T-cell (primary cell): ENCODE measurements at regions of chr15 and their contacts with region 1.

Region 1: DNA sequence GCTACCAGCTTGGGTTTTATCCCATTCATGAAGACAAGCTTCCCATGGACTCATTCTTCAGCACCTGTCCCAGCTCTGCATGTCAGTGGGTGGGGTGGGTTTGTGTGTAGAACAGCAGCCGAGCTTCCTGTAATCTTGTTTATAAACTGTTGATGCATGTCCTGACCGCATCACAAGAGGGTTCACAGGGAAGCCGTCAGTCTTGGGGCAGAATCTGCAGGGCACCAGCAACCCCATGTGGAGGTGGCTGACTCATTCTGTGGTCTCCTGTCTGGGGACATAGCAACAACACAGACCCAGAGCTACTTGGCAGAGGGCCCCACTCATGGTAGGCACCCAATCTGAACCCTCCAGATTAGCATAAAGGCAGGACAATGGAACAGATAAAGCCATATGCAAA is 35.6 kb downstream of the DAPK2 start:
- DNase-seq: peak; percentile 64 to 96 (median 87)
- ATAC-seq: peak; percentile 97 to 99 (median 98)
- H3K4me3 ChIP-seq: no peak overlapping the region
- H3K4me3 Mint-ChIP-seq: peak overlapping the region; percentile 62 to 73 (median 64)
- H3K27ac ChIP-seq: peak overlapping the region; percentile 87
- H3K27ac Mint-ChIP-seq: peak overlapping the region; percentile 97 to 98
- H3K4me1 ChIP-seq: peaks cover 10 to 34% of the 10 kb centered on the region in 2 experiments
- H3K4me1 Mint-ChIP-seq: peaks cover 31 to 81% (median 48%) of the 10 kb centered on the region in 3 donors
- H3K27me3 ChIP-seq: no peaks in the 10 kb centered on the region
- H3K27me3 Mint-ChIP-seq: no peaks in the 10 kb centered on the region

Region 2: DNA sequence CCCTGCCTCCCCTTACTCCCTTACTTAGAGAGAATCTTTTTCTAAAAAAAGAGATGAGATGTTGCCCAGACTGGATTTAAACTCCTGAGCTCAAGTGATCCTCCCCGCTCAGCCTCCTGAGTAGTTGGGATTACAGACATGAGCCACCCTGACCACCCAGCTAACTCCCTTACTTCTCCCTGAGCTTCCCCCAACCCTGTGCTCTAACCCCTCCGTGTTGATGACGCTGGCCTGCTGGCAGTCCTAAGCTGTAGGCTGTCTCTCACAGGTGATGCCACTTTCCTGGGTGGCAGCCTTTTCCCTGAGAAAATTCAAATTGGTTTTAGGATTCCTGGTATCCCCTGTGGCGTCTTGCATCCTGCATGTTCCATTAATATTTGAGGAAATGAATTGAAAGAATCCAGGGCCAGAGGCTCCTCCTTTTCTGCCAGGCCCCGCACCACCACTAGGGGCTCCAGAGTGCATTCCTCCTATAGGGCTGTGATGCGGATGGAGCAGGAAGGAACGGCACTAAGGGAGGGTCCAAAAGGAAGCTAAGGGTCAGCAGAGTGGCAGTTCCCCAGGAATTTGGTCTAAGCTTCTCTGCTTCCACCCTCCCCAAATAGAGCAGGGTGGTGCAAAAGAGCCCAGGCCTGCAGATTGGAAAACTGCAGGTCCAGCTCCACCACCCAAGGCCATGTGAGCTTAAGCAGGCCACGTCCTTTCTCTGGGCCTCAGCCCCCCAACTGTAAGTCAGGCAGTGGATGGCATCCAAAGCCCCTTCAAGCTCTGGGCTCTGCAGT is 65.5 kb before region 1 on chr15:
- CTCF ChIA-PET with region 1: interaction called, 5 to 19 read pairs
- POLR2A ChIA-PET with region 1: no interaction called
- DNase-seq: peak; percentile 11 to 73 (median 58)
- ATAC-seq: peak; percentile 81 to 91 (median 89)
- H3K4me3 ChIP-seq: no peak overlapping the region
- H3K4me3 Mint-ChIP-seq: peak overlapping the region in 1 of 3 donors; percentile 13
- H3K27ac ChIP-seq: no peak overlapping the region
- H3K27ac Mint-ChIP-seq: peak overlapping the region; percentile 8 to 74
- H3K4me1 ChIP-seq: peaks cover 0 to 14% of the 10 kb centered on the region in 2 experiments
- H3K4me1 Mint-ChIP-seq: peaks cover 13 to 28% (median 20%) of the 10 kb centered on the region in 3 donors
- H3K27me3 ChIP-seq: no peaks in the 10 kb centered on the region
- H3K27me3 Mint-ChIP-seq: no peaks in the 10 kb centered on the region

Region 3: DNA sequence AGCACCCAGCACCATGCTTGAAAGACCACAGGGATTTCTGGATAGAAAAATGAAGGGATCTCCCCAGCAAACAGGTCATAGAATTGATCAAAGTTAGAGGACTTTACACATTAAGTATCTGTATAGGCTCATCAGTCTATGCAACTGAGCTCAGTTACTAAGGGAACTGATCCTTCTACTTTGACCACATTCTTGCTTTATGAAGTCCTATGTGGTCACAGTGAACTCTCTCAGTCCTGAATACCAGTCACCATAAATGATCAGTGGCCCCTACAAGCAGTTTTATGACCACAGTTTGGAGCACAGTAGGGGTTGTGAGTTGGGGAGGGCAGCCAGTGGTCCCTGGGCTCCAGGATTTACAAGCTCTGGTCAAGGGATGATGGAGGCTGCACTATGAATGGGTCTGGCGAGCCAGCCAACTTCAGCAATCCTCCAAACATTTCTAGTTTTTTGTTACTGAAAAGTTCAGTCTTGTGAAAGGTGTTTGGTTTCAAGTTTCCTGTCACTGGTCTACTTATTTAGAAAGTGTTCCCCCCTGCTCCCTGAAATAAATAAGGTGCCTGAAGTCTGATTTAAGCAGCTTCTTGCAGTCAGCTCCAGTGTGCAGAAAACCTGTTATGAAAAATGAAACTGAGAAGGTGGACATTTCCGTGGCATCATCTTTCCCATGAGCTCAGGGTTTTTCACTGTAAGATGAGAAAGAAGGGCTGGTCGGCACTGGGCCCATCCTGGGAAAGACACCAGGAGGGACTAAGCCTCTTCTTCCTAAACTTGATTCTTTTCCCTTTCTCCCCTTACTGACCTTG is 39.9 kb before region 1 on chr15:
- CTCF ChIA-PET with region 1: interaction called in 1 of 2 experiments, 16 read pairs
- POLR2A ChIA-PET with region 1: interaction called in 1 of 2 experiments, 3 read pairs
- DNase-seq: peak in 1 of 35 experiments; percentile 34
- ATAC-seq: peak; percentile 39 to 58 (median 48)
- H3K4me3 ChIP-seq: peak overlapping the region in 1 of 2 donors; percentile 19
- H3K4me3 Mint-ChIP-seq: peak overlapping the region; percentile 48 to 54 (median 53)
- H3K27ac ChIP-seq: peak overlapping the region; percentile 90
- H3K27ac Mint-ChIP-seq: peak overlapping the region; percentile 90 to 99
- H3K4me1 ChIP-seq: peaks cover 18 to 37% of the 10 kb centered on the region in 2 experiments
- H3K4me1 Mint-ChIP-seq: peaks cover 37 to 51% (median 41%) of the 10 kb centered on the region in 3 donors
- H3K27me3 ChIP-seq: peaks cover 0 to 4% of the 10 kb centered on the region in 2 experiments
- H3K27me3 Mint-ChIP-seq: peaks cover 0 to 2% of the 10 kb centered on the region in 2 donors

Region 4: DNA sequence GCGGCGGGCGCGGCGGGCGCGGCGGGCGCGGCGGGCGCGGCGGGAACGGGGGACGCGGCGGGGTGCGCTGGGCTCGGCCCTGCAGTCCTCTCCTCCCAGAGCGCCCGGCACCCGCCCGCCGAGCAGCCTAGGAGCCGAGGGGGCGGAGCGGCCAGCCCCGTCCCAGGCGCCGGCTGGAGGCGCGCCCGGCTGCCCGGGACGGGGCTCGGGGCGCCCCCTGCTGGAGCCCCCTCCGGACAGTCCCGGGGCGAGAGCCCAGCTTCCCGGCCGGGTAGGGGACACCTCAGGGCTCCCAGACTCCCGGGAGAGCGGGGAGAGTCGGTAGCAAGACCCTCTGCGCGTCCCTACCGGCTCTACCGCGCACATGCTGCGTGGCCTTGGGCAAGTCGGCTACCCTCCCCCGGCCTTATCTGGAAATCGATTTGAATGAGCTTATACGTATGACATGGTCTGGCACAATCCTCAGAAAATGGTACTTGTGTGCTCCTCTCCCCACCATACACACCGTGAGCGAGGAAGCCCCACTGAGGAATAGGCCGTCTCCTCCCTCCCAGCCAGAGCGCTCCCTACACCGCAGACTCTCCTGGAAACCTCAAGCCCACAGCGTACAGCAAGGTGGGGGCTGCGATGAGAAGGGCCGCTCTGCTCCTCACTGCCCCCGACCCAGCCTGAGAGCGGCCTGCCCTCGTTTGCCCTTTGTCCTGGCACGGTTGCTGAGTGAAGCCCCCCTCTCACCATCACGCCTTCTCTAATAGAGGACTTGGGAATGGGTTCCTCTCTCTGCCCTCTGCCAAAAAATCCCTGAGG is 35.8 kb after region 1 on chr15 and contains the start of gene DAPK2:
- CTCF ChIA-PET with region 1: interaction called in 1 of 2 experiments, 19 read pairs
- POLR2A ChIA-PET with region 1: no interaction called
- DNase-seq: peak in 34 of 35 experiments; percentile 14 to 82 (median 44)
- ATAC-seq: peak; percentile 89 to 93 (median 92)
- H3K4me3 ChIP-seq: peak within 1 kb of the TSS; percentile 49 to 55
- H3K4me3 Mint-ChIP-seq: peak within 1 kb of the TSS; percentile 70 to 81 (median 71)
- H3K27ac ChIP-seq: no peak within 1 kb of the TSS
- H3K27ac Mint-ChIP-seq: no peak within 1 kb of the TSS
- H3K4me1 ChIP-seq: peaks cover 0 to 17% of the 10 kb centered on the region in 2 experiments
- H3K4me1 Mint-ChIP-seq: peaks cover 7 to 28% (median 11%) of the 10 kb centered on the region in 3 donors
- H3K27me3 ChIP-seq: peaks cover 0 to 41% of the 10 kb centered on the region in 2 experiments
- H3K27me3 Mint-ChIP-seq: peaks cover 7 to 13% of the 10 kb centered on the region in 2 donors
- total RNA-seq, gene DAPK2: 0.78 to 23.5 (median 6.1) TPM

Region 5: GRCh38 chr15:64137226-64138220 is 126.8 kb after region 1 on chr15:
- CTCF ChIA-PET with region 1: no interaction called
- POLR2A ChIA-PET with region 1: no interaction called
- DNase-seq: peak in 1 of 35 experiments; percentile 18
- ATAC-seq: peak in 3 of 4 experiments; percentile 23 to 48 (median 38)
- H3K4me3 ChIP-seq: no peak overlapping the region
- H3K4me3 Mint-ChIP-seq: no peak overlapping the region
- H3K27ac ChIP-seq: no peak overlapping the region
- H3K27ac Mint-ChIP-seq: no peak overlapping the region
- H3K4me1 ChIP-seq: no peaks in the 10 kb centered on the region
- H3K4me1 Mint-ChIP-seq: no peaks in the 10 kb centered on the region
- H3K27me3 ChIP-seq: no peaks in the 10 kb centered on the region
- H3K27me3 Mint-ChIP-seq: no peaks in the 10 kb centered on the region

Region 6: DNA sequence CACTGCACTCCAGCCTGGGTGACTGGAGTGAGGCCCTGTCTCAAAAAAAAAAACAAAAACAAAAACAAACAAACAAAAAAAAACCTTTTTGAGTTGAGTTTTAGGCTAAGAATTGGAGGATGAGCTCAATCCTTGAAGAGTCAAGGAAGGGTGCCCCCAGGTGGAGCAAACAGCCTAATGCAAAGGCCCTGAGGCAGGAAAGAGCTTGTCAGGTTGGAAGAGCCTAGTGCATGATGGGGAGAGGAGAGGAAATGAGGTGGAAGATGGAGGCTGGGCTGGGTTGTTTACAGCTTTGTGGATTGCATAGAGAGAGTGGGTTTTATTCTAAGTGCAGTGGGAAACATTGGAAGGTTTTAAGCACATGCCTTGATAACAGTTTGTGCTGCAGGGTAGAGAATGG is 138.7 kb after region 1 on chr15:
- CTCF ChIA-PET with region 1: no interaction called
- POLR2A ChIA-PET with region 1: no interaction called
- DNase-seq: no peak
- ATAC-seq: no peak
- H3K4me3 ChIP-seq: no peak overlapping the region
- H3K4me3 Mint-ChIP-seq: peak overlapping the region in 1 of 3 donors; percentile 47
- H3K27ac ChIP-seq: no peak overlapping the region
- H3K27ac Mint-ChIP-seq: peak overlapping the region in 1 of 2 donors; percentile 16
- H3K4me1 ChIP-seq: peaks cover 7 to 44% of the 10 kb centered on the region in 2 experiments
- H3K4me1 Mint-ChIP-seq: peaks cover 27 to 32% (median 31%) of the 10 kb centered on the region in 3 donors
- H3K27me3 ChIP-seq: peaks cover 0 to 33% of the 10 kb centered on the region in 2 experiments
- H3K27me3 Mint-ChIP-seq: peaks cover 7 to 14% of the 10 kb centered on the region in 2 donors